ENCODE measurements at regions of chr14 and their contacts with region 1.

Region 1: DNA sequence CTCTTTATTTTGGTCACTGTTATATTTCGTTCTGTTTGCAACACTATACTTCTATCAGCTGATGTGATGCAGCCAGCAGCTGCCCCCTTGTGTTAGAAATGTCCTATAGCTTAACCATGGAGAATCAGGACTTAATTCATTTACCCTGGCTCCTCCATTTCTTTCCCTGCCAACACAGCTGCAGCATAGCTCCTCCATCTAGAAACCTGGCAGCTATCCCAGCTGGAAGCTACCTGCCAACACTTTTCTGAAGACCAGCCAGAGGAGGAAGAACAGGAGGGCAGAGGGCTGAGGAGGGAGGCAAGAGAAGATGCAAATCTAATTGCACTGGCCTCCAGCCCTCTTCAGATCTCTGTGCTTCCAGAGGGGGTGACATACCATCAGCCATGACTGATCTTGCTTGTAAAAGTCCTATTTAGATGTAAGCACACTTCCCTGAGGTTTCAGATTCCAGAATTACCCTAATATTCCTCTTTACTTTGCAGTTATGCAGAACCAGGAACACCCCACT is 156.8 kb upstream of the TMEM260 start:
- DNase-seq: peak in 1 of 2 donors; percentile 41
- ATAC-seq: peak in 1 of 3 donors; percentile 57
- H3K4me3 ChIP-seq: no peak overlapping the region
- H3K4me3 Mint-ChIP-seq: no peak overlapping the region
- H3K27ac ChIP-seq: no peak overlapping the region
- H3K27ac Mint-ChIP-seq: no peak overlapping the region
- H3K4me1 ChIP-seq: no peaks in the 10 kb centered on the region
- H3K4me1 Mint-ChIP-seq: no peaks in the 10 kb centered on the region
- H3K27me3 ChIP-seq: no peaks in the 10 kb centered on the region
- H3K27me3 Mint-ChIP-seq: peaks cover 7 to 22% of the 10 kb centered on the region in 2 donors
- CTCF ChIP-seq: peak; percentile 26

Region 2: DNA sequence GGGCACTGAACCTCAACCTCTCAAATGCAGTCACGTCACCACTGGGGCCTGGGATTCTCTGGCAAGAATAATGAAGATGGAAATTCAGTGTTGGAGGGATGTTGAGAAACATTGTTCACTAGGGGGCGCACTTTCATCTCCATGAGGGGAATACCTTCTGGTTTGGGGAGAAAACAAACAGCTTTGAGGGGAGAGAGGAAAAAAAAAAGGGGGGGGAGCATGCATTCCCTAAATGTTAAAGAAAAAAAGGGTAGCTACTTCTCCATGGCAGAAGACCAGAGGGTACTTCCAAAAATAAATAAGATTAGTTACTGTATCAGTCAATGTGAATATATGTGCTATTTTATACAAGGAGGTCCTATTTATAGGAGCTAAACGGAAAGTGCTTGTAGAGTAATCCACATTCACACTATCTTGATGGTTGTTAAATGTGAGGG is 976.5 kb before region 1 on chr14:
- intact Hi-C with region 1: loop called (anchors 1 kb)
- DNase-seq: peak in 1 of 2 donors; percentile 81
- ATAC-seq: peak; percentile 50 to 55 (median 52)
- H3K4me3 ChIP-seq: no peak overlapping the region
- H3K4me3 Mint-ChIP-seq: no peak overlapping the region
- H3K27ac ChIP-seq: no peak overlapping the region
- H3K27ac Mint-ChIP-seq: no peak overlapping the region
- H3K4me1 ChIP-seq: no peaks in the 10 kb centered on the region
- H3K4me1 Mint-ChIP-seq: no peaks in the 10 kb centered on the region
- H3K27me3 ChIP-seq: no peaks in the 10 kb centered on the region
- H3K27me3 Mint-ChIP-seq: no peaks in the 10 kb centered on the region
- CTCF ChIP-seq: peak; percentile 80

Region 3: GRCh38 chr14:55707365-55707804 is 715.4 kb before region 1 on chr14:
- intact Hi-C with region 1: loop called (anchors 1 kb)
- DNase-seq: peak in 1 of 2 donors; percentile 40
- ATAC-seq: no peak
- H3K4me3 ChIP-seq: no peak overlapping the region
- H3K4me3 Mint-ChIP-seq: no peak overlapping the region
- H3K27ac ChIP-seq: no peak overlapping the region
- H3K27ac Mint-ChIP-seq: no peak overlapping the region
- H3K4me1 ChIP-seq: no peaks in the 10 kb centered on the region
- H3K4me1 Mint-ChIP-seq: no peaks in the 10 kb centered on the region
- H3K27me3 ChIP-seq: no peaks in the 10 kb centered on the region
- H3K27me3 Mint-ChIP-seq: no peaks in the 10 kb centered on the region
- CTCF ChIP-seq: peak; percentile 38

Region 4: GRCh38 chr14:55731881-55732498 is 690.8 kb before region 1 on chr14:
- intact Hi-C with region 1: loop called (anchors 2 kb)
- DNase-seq: peak; percentile 34 to 69
- ATAC-seq: peak in 1 of 3 donors; percentile 61
- H3K4me3 ChIP-seq: no peak overlapping the region
- H3K4me3 Mint-ChIP-seq: no peak overlapping the region
- H3K27ac ChIP-seq: no peak overlapping the region
- H3K27ac Mint-ChIP-seq: no peak overlapping the region
- H3K4me1 ChIP-seq: no peaks in the 10 kb centered on the region
- H3K4me1 Mint-ChIP-seq: peaks cover 6 to 29% of the 10 kb centered on the region in 2 donors
- H3K27me3 ChIP-seq: no peaks in the 10 kb centered on the region
- H3K27me3 Mint-ChIP-seq: no peaks in the 10 kb centered on the region
- CTCF ChIP-seq: peak; percentile 86

Region 5: DNA sequence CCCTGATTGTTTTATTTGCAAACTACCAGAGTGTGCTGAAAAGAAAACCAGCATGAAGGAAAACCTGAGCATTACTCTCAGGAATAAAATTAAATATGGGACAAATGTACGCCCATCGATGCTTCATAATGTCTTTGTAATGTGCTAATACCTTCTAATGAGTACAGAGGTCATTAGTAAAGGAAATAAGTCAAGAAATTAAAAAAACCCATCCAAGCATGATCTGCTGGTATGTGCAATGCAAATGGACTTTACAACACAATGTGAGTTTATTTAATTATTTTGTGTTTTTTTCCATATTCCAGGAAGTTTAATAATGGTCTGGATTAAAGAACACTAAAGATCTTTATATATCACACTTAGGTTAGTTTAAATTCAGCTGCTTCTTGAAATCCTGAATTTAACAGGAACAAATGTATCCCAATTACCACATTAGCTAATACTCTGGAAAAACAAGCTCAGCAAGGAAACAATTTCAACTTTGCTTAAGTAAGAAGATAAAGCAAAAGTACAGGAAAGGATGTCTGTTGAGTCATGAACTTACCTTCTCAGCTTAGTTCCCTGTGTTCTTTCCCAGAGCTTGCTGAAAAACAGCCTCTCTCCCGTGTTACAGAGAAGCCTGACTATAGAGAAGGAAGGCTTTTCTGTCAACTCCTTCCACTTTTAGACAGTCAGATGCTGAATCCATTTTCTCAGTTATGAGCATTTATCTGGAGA is 22.5 kb before region 1 on chr14:
- intact Hi-C with region 1: no loop called
- DNase-seq: no peak
- ATAC-seq: no peak
- H3K4me3 ChIP-seq: no peak overlapping the region
- H3K4me3 Mint-ChIP-seq: no peak overlapping the region
- H3K27ac ChIP-seq: no peak overlapping the region
- H3K27ac Mint-ChIP-seq: no peak overlapping the region
- H3K4me1 ChIP-seq: no peaks in the 10 kb centered on the region
- H3K4me1 Mint-ChIP-seq: no peaks in the 10 kb centered on the region
- H3K27me3 ChIP-seq: no peaks in the 10 kb centered on the region
- H3K27me3 Mint-ChIP-seq: peaks cover 0 to 3% of the 10 kb centered on the region in 2 donors
- CTCF ChIP-seq: no peak